Vagina (tissue), 2 donors: ENCODE measurements at regions of chr17 and their contacts with region 1.

Region 1: DNA sequence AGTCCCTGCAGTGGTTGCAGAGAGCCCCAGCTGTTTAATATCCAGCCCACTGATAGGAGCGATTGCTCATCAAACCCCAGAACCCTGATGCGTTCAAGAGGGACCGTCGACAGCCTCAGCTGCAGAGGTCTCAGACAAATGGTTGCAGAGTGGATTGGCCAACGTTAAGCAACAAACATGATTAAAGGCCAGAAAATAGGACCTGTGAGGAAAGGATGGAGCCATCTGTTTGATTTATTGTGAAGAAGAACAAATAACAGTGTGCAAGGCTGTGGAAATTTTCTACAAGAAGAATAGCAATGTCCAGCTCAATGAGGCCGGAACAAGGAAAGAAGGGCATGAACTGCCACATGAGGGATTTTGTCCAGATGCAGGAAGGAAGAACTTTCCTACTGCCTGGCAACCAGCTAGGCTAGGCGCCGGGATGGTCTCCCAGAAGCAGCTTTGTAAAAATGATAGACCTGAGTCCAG is 138.4 kb upstream of the DNAH9 start:
- DNase-seq: no peak
- H3K4me3 ChIP-seq: no peak overlapping the region
- H3K27ac ChIP-seq: no peak overlapping the region
- H3K4me1 ChIP-seq: no peaks in the 10 kb centered on the region
- H3K27me3 ChIP-seq: no peaks in the 10 kb centered on the region
- CTCF ChIP-seq: no peak
- POLR2A ChIP-seq: no peak

Region 2: DNA sequence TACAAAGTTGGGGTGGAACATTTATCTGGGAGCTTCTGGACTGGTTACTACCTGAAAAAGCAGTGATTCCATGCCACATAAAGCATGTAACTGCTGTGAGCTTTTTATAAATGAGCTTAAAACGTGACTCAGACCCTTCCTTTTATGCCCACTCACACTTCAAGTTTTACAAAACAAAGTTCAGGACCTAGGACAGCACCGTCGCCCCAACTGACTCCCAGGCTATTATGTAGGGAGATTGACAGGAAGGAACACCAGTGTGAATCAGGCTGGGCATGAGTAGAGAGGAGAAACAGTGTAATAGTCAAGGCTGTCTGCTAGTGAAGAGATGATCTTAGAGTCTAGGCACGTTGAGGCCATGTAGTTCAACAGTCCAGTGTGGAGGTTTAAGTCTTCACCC is 46.7 kb after region 1 on chr17:
- intact Hi-C with region 1: no loop called
- DNase-seq: no peak
- H3K4me3 ChIP-seq: no peak overlapping the region
- H3K27ac ChIP-seq: no peak overlapping the region
- H3K4me1 ChIP-seq: no peaks in the 10 kb centered on the region
- H3K27me3 ChIP-seq: no peaks in the 10 kb centered on the region
- CTCF ChIP-seq: no peak
- POLR2A ChIP-seq: no peak

Region 3: GRCh38 chr17:12619459-12620199 is 1159.7 kb after region 1 on chr17:
- intact Hi-C with region 1: loop called (anchors 5 kb)
- DNase-seq: no peak
- H3K4me3 ChIP-seq: no peak overlapping the region
- H3K27ac ChIP-seq: no peak overlapping the region
- H3K4me1 ChIP-seq: no peaks in the 10 kb centered on the region
- H3K27me3 ChIP-seq: no peaks in the 10 kb centered on the region
- CTCF ChIP-seq: no peak
- POLR2A ChIP-seq: no peak